ENCODE measurements at regions of chr6 and their contacts with region 1.

Region 1: GRCh38 chr6:139028658-139029469 is at the start of gene ABRACL:
- DNase-seq: peak; percentile 44 to 87 (median 81)
- ATAC-seq: peak; percentile 88
- H3K4me3 ChIP-seq: peak within 1 kb of the TSS; percentile 72
- H3K4me3 Mint-ChIP-seq: peak within 1 kb of the TSS in 6 of 10 donors; percentile 88 to 98 (median 94)
- H3K27ac ChIP-seq: peak within 1 kb of the TSS; percentile 88
- H3K27ac Mint-ChIP-seq: peak within 1 kb of the TSS in 8 of 9 donors; percentile 58 to 97 (median 94)
- H3K4me1 ChIP-seq: peaks cover 3 to 18% of the 10 kb centered on the region in 2 donors
- H3K4me1 Mint-ChIP-seq: peaks cover 13 to 35% (median 24%) of the 10 kb centered on the region in 7 donors
- H3K27me3 ChIP-seq: no peaks in the 10 kb centered on the region
- H3K27me3 Mint-ChIP-seq: no peaks in the 10 kb centered on the region
- total RNA-seq, gene ABRACL: 39.5 to 137 (median 107) TPM

Region 2: DNA sequence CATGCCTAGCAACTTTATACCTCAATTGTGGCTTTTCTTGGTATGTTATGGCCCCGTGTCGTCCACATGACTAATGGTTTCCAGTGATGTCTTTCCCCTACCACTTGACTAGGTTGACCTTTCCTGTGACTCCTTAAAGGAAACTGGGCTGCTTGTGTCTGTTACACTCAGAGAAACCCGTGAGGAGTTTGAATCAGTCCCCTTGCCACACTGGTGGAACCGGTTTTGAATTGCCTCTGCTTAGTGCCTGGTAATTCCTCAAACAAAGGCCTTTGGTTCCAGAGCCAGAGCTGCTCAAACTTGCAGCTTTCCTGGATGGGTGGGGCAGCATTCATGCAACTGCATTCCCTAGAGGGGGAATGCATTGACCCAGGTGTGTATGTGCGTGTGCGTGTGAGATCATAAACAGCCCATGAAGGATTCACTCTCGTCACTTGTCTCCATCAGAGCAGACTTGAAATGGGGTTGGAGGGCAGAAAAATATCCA is 211.0 kb before region 1 on chr6:
- CTCF ChIA-PET with region 1: no interaction called
- POLR2A ChIA-PET with region 1: interaction called, 4 read pairs
- intact Hi-C with region 1: loop called in 1 of 2 experiments (anchors 5 kb)
- DNase-seq: peak in 1 of 9 donors; percentile 28
- ATAC-seq: no peak
- H3K4me3 ChIP-seq: no peak overlapping the region
- H3K4me3 Mint-ChIP-seq: no peak overlapping the region
- H3K27ac ChIP-seq: no peak overlapping the region
- H3K27ac Mint-ChIP-seq: peak overlapping the region in 1 of 9 donors; percentile 21
- H3K4me1 ChIP-seq: no peaks in the 10 kb centered on the region
- H3K4me1 Mint-ChIP-seq: peaks cover 0 to 30% (median 0%) of the 10 kb centered on the region in 7 donors
- H3K27me3 ChIP-seq: no peaks in the 10 kb centered on the region
- H3K27me3 Mint-ChIP-seq: no peaks in the 10 kb centered on the region

Region 3: GRCh38 chr6:139016337-139017213 is 12.3 kb before region 1 on chr6:
- CTCF ChIA-PET with region 1: no interaction called
- POLR2A ChIA-PET with region 1: interaction called, 12 read pairs
- intact Hi-C with region 1: no loop called
- DNase-seq: peak in 3 of 9 donors; percentile 7 to 8 (median 7)
- ATAC-seq: peak; percentile 52
- H3K4me3 ChIP-seq: no peak overlapping the region
- H3K4me3 Mint-ChIP-seq: peak overlapping the region in 6 of 10 donors; percentile 7 to 60 (median 40)
- H3K27ac ChIP-seq: no peak overlapping the region
- H3K27ac Mint-ChIP-seq: peak overlapping the region in 2 of 9 donors; percentile 63 to 73
- H3K4me1 ChIP-seq: peaks cover 0 to 5% of the 10 kb centered on the region in 2 donors
- H3K4me1 Mint-ChIP-seq: peaks cover 0 to 23% (median 12%) of the 10 kb centered on the region in 7 donors
- H3K27me3 ChIP-seq: no peaks in the 10 kb centered on the region
- H3K27me3 Mint-ChIP-seq: peaks cover 0 to 11% (median 0%) of the 10 kb centered on the region in 5 donors

Region 4: GRCh38 chr6:139064981-139065665 is 36.3 kb after region 1 on chr6:
- CTCF ChIA-PET with region 1: no interaction called
- POLR2A ChIA-PET with region 1: no interaction called
- intact Hi-C with region 1: no loop called
- DNase-seq: no peak
- ATAC-seq: no peak
- H3K4me3 ChIP-seq: no peak overlapping the region
- H3K4me3 Mint-ChIP-seq: no peak overlapping the region
- H3K27ac ChIP-seq: no peak overlapping the region
- H3K27ac Mint-ChIP-seq: no peak overlapping the region
- H3K4me1 ChIP-seq: no peaks in the 10 kb centered on the region
- H3K4me1 Mint-ChIP-seq: no peaks in the 10 kb centered on the region
- H3K27me3 ChIP-seq: no peaks in the 10 kb centered on the region
- H3K27me3 Mint-ChIP-seq: peaks cover 0 to 7% (median 0%) of the 10 kb centered on the region in 5 donors

Region 5: GRCh38 chr6:139124887-139125672 is 96.2 kb after region 1 on chr6:
- CTCF ChIA-PET with region 1: interaction called, 6 read pairs
- POLR2A ChIA-PET with region 1: interaction called, 16 read pairs
- intact Hi-C with region 1: loop called (anchors 1 to 2 kb)
- DNase-seq: peak in 8 of 9 donors; percentile 65 to 90 (median 84)
- ATAC-seq: peak; percentile 99
- H3K4me3 ChIP-seq: peak overlapping the region; percentile 31
- H3K4me3 Mint-ChIP-seq: peak overlapping the region; percentile 25 to 86 (median 68)
- H3K27ac ChIP-seq: peak overlapping the region; percentile 60
- H3K27ac Mint-ChIP-seq: peak overlapping the region; percentile 86 to 97 (median 94)
- H3K4me1 ChIP-seq: peaks cover 28 to 38% of the 10 kb centered on the region in 2 donors
- H3K4me1 Mint-ChIP-seq: peaks cover 19 to 65% (median 60%) of the 10 kb centered on the region in 7 donors
- H3K27me3 ChIP-seq: no peaks in the 10 kb centered on the region
- H3K27me3 Mint-ChIP-seq: no peaks in the 10 kb centered on the region

Region 6: GRCh38 chr6:139173172-139173571 is 144.3 kb after region 1 on chr6:
- CTCF ChIA-PET with region 1: no interaction called
- POLR2A ChIA-PET with region 1: interaction called, 4 read pairs
- intact Hi-C with region 1: loop called in 1 of 2 experiments (anchors 1 kb)
- DNase-seq: peak in 6 of 9 donors; percentile 31 to 54 (median 40)
- ATAC-seq: peak; percentile 69
- H3K4me3 ChIP-seq: no peak overlapping the region
- H3K4me3 Mint-ChIP-seq: peak overlapping the region; percentile 16 to 75 (median 60)
- H3K27ac ChIP-seq: peak overlapping the region; percentile 49
- H3K27ac Mint-ChIP-seq: peak overlapping the region; percentile 64 to 88 (median 83)
- H3K4me1 ChIP-seq: peaks cover 50 to 85% of the 10 kb centered on the region in 2 donors
- H3K4me1 Mint-ChIP-seq: peaks cover 70 to 95% (median 92%) of the 10 kb centered on the region in 7 donors
- H3K27me3 ChIP-seq: no peaks in the 10 kb centered on the region
- H3K27me3 Mint-ChIP-seq: no peaks in the 10 kb centered on the region

Measured in naive thymus-derived CD4-positive, alpha-beta T cell (primary cell).